ENCODE measurements at regions of chr10 and their contacts with region 1.

Region 1: GRCh38 chr10:91298224-91298871 is 77.9 kb downstream of the PCGF5 start:
- DNase-seq: peak; percentile 78 to 93
- H3K4me3 ChIP-seq: peak overlapping the region; percentile 14 to 47 (median 26); a peak in 6 of 8 replicates
- H3K27ac ChIP-seq: no peak overlapping the region
- H3K4me1 ChIP-seq: peaks cover 0 to 3% (median under 1%) of the 10 kb centered on the region in 4 experiments; a peak in 1 of 7 replicates
- H3K27me3 ChIP-seq: no peaks in the 10 kb centered on the region
- CTCF ChIP-seq: peak; percentile 89 to 97 (median 95)
- EP300 ChIP-seq: no peak
- POLR2A ChIP-seq: peak in 1 of 2 experiments; percentile 38; a peak in 1 of 3 replicates
- RAD21 ChIP-seq: peak; percentile 97

Region 2: DNA sequence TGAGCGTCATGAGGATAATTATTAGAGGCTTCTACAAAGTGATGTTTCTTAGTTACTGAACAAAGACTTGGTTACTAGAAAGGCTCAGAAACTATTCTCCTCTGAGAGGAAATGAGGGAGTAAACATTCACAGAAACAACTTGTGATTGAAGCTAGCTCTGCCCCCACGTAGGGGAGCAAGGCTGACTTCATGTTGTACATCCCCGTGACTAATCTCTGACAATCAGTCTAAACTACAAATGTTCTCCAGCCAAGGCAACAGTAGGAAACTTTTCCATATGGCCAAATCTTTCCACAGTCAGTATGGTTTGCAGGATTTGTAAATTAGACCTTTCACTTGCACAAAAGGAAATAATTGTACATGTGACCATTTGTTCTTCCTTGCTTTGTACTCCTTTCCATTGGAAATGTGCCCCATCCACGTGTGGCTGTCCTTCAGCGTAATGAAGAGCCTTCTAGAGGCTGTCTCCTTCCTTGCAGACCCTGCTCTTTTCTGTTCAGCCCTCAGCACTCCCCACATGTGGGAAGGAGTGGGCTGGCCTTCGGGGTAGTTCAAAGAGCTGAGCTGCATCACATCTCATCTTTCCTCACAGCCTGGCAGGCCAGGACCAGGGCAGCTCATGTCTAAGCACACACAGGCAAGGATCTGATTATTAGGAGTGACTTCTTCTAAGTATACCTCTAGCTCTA is 15.6 kb after region 1 on chr10:
- CTCF ChIA-PET with region 1: interaction called, 26 read pairs
- POLR2A ChIA-PET with region 1: interaction called, 3 read pairs
- DNase-seq: no peak
- H3K4me3 ChIP-seq: no peak overlapping the region
- H3K27ac ChIP-seq: no peak overlapping the region
- H3K4me1 ChIP-seq: no peaks in the 10 kb centered on the region
- H3K27me3 ChIP-seq: peaks cover 0 to 1% (median 0%) of the 10 kb centered on the region in 4 experiments; a peak in 1 of 7 replicates
- CTCF ChIP-seq: no peak
- EP300 ChIP-seq: no peak
- POLR2A ChIP-seq: no peak
- RAD21 ChIP-seq: no peak

Region 3: GRCh38 chr10:91381257-91381891 is 83.0 kb after region 1 on chr10:
- CTCF ChIA-PET with region 1: interaction called, 12 read pairs
- POLR2A ChIA-PET with region 1: no interaction called
- DNase-seq: no peak
- H3K4me3 ChIP-seq: no peak overlapping the region
- H3K27ac ChIP-seq: no peak overlapping the region
- H3K4me1 ChIP-seq: no peaks in the 10 kb centered on the region
- H3K27me3 ChIP-seq: no peaks in the 10 kb centered on the region
- CTCF ChIP-seq: no peak
- EP300 ChIP-seq: no peak
- POLR2A ChIP-seq: no peak
- RAD21 ChIP-seq: no peak

Region 4: GRCh38 chr10:91389636-91390512 is 91.5 kb after region 1 on chr10:
- CTCF ChIA-PET with region 1: interaction called, 10 read pairs
- POLR2A ChIA-PET with region 1: no interaction called
- DNase-seq: no peak
- H3K4me3 ChIP-seq: no peak overlapping the region
- H3K27ac ChIP-seq: no peak overlapping the region
- H3K4me1 ChIP-seq: no peaks in the 10 kb centered on the region
- H3K27me3 ChIP-seq: no peaks in the 10 kb centered on the region
- CTCF ChIP-seq: peak in 2 of 3 experiments; percentile 29 to 40; a peak in 2 of 4 replicates
- EP300 ChIP-seq: no peak
- POLR2A ChIP-seq: no peak
- RAD21 ChIP-seq: peak; percentile 51 to 53

Measured in H1 (cell line).